Activated CD4-positive, alpha-beta memory T cell treated with anti-CD3 and anti-CD28 coated beads, Interleukin-2, amount 10 ng/mL, durations not matched to agents 7 days and 5 days (primary cell): ENCODE measurements at regions of chr6 and their contacts with region 1.

Region 1: DNA sequence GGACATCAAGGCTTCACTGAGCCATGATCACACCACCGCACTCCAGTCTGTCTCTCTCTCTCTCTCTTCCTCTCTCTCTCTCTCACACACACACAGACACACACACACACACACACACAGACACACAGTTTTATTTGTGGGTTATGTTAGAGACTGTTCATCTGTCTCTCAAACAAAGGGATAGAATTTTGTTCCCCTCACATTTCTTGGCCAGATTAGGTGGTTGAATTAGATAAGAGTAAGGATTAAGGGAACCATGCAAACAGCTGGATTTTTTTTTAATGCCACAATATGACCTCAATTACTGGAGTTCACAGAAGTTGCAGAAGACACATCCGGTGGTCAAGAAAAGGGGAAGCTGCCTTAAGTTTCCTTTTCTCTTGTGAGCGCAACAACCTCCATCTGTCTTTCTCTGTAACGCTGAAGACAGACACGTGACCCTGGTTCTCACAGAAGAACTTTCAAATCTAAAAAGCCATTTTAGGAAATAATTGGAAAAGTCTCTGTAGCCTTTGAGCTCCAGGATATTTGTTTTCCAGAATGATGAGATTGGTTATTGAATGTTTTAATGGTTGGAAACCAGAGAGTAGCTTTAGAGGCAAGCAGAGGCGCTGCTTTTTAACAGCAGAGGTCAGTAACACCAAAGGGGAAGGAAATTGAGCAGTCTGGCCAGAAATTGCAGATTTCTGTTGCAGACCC is 33.0 kb upstream of the LGSN start:
- DNase-seq: peak; percentile 18
- H3K4me3 Mint-ChIP-seq: peak overlapping the region; percentile 44
- H3K27ac Mint-ChIP-seq: peak overlapping the region; percentile 45
- H3K4me1 Mint-ChIP-seq: peaks cover 17% of the 10 kb centered on the region
- H3K27me3 Mint-ChIP-seq: peaks cover 13% of the 10 kb centered on the region

Region 2: GRCh38 chr6:63764318-63764916 is 411.7 kb after region 1 on chr6:
- CTCF ChIA-PET with region 1: interaction called, 36 read pairs
- POLR2A ChIA-PET with region 1: interaction called, 4 read pairs
- DNase-seq: no peak
- H3K4me3 Mint-ChIP-seq: no peak overlapping the region
- H3K27ac Mint-ChIP-seq: no peak overlapping the region
- H3K4me1 Mint-ChIP-seq: no peaks in the 10 kb centered on the region
- H3K27me3 Mint-ChIP-seq: peaks cover 14% of the 10 kb centered on the region

Region 3: GRCh38 chr6:63802606-63803206 is 450.0 kb after region 1 on chr6:
- CTCF ChIA-PET with region 1: interaction called, 16 read pairs
- POLR2A ChIA-PET with region 1: no interaction called
- DNase-seq: no peak
- H3K4me3 Mint-ChIP-seq: no peak overlapping the region
- H3K27ac Mint-ChIP-seq: no peak overlapping the region
- H3K4me1 Mint-ChIP-seq: peaks cover 1% of the 10 kb centered on the region
- H3K27me3 Mint-ChIP-seq: peaks cover 2% of the 10 kb centered on the region

Region 4: GRCh38 chr6:65123521-65123920 is 1770.8 kb after region 1 on chr6:
- CTCF ChIA-PET with region 1: no interaction called
- POLR2A ChIA-PET with region 1: no interaction called
- DNase-seq: no peak
- H3K4me3 Mint-ChIP-seq: no peak overlapping the region
- H3K27ac Mint-ChIP-seq: no peak overlapping the region
- H3K4me1 Mint-ChIP-seq: no peaks in the 10 kb centered on the region
- H3K27me3 Mint-ChIP-seq: no peaks in the 10 kb centered on the region